ENCODE measurements at regions of chr17 and their contacts with region 1.

Region 1: GRCh38 chr17:82518826-82519810 is at the start of gene FOXK2:
- DNase-seq: peak; percentile 75
- ATAC-seq: peak; percentile 98
- H3K4me3 ChIP-seq: peak within 1 kb of the TSS; percentile 71
- H3K27ac ChIP-seq: peak within 1 kb of the TSS; percentile 90
- H3K4me1 ChIP-seq: peaks cover 5% of the 10 kb centered on the region
- H3K27me3 ChIP-seq: no peaks in the 10 kb centered on the region
- CTCF ChIP-seq: no peak
- EP300 ChIP-seq: no peak
- POLR2A ChIP-seq: peak; percentile 55
- RAD21 ChIP-seq: no peak
- polyA plus RNA-seq, gene FOXK2: 2.4 to 3.8 TPM

Region 2: DNA sequence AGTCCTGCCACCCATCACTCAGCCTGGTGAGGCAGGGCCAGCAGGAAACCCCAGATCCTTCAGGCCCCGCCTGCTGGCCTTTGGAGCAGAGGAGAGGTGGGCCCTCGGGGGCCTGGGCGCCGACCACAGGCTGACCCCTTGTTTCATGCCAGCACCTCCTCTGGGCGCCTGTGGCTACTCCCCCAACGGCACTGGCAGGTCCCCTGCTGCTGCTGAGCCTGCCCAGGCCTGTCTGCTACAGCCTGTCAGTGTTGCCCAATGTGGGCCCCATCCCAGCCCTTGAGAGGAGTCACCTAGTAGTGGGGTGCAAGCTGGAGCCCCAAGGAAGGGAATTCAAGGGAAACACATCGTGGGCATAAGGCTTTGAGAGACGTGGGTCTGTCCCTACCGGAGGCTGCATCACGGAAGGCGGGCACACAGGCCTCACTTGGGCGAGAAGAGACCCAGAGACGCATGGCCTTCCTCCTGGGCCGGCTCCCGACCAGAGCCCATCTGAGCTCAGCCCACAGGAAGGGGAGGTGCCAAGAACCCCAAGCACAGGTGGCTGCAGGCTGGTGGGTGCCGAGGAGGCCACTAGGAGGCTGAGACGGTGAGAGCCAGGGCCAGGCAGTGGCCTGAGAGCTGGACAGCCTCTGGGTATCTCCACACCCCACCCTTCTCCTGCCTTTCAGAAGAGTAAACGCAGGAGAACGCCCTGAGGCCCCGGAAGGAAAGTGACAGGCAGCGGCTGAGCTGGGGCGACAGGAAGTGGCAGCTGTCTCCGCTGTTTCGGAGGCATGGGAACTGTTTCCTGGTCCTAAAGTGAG is 413.0 kb before region 1 on chr17:
- CTCF ChIA-PET with region 1: no interaction called
- POLR2A ChIA-PET with region 1: no interaction called
- RAD21 ChIA-PET with region 1: no interaction called
- SMC1A ChIA-PET with region 1: no interaction called
- in situ Hi-C with region 1: no loop called
- intact Hi-C with region 1: no loop called
- DNase-seq: peak; percentile 51
- ATAC-seq: peak; percentile 99
- H3K4me3 ChIP-seq: peak overlapping the region; percentile 77
- H3K27ac ChIP-seq: peak overlapping the region; percentile 87
- H3K4me1 ChIP-seq: peaks cover 21% of the 10 kb centered on the region
- H3K27me3 ChIP-seq: no peaks in the 10 kb centered on the region
- CTCF ChIP-seq: peak; percentile 46 to 63 (median 56)
- EP300 ChIP-seq: no peak
- POLR2A ChIP-seq: peak; percentile 95
- RAD21 ChIP-seq: no peak

Region 3: GRCh38 chr17:82351716-82352488 is 167.2 kb before region 1 on chr17:
- CTCF ChIA-PET with region 1: no interaction called
- POLR2A ChIA-PET with region 1: no interaction called
- RAD21 ChIA-PET with region 1: no interaction called
- SMC1A ChIA-PET with region 1: no interaction called
- in situ Hi-C with region 1: no loop called
- intact Hi-C with region 1: no loop called
- DNase-seq: no peak
- ATAC-seq: peak; percentile 93
- H3K4me3 ChIP-seq: no peak overlapping the region
- H3K27ac ChIP-seq: no peak overlapping the region
- H3K4me1 ChIP-seq: peaks cover 15% of the 10 kb centered on the region
- H3K27me3 ChIP-seq: no peaks in the 10 kb centered on the region
- CTCF ChIP-seq: peak; percentile 92 to 93 (median 92)
- EP300 ChIP-seq: no peak
- POLR2A ChIP-seq: no peak
- RAD21 ChIP-seq: peak; percentile 86

Region 4: DNA sequence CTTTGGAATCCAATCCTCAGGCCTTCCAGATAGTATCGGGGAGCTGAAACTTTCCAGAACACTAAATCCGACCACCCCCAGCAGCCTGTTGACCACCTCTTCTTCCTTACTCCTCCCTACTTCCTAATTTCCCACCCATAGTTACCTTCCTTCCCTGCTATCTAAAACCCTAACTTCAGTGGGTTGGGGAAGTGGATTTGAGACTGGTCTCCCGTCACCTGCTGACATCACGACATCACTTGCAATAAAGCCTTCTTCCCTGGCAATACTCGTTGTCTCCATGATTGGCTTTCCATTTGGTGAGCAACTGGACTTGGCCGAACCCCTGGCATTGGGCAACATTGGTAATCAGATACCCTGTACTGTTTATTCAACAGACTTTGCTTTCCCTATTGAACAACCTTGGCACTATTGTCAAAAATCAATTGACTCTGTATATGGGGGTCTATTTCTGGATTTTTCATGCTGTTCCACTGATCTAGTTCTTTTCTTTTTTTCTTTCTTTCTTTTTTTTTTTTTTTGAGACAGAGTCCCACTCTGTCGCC is 11.4 kb before region 1 on chr17:
- CTCF ChIA-PET with region 1: interaction called, 6 read pairs
- POLR2A ChIA-PET with region 1: interaction called, 19 read pairs
- RAD21 ChIA-PET with region 1: interaction called, 4 read pairs
- SMC1A ChIA-PET with region 1: interaction called, 11 read pairs
- in situ Hi-C with region 1: no loop called
- intact Hi-C with region 1: no loop called
- DNase-seq: no peak
- ATAC-seq: no peak
- H3K4me3 ChIP-seq: no peak overlapping the region
- H3K27ac ChIP-seq: no peak overlapping the region; the same call in 1 of the 2 replicates
- H3K4me1 ChIP-seq: peaks cover 11% of the 10 kb centered on the region
- H3K27me3 ChIP-seq: no peaks in the 10 kb centered on the region
- CTCF ChIP-seq: no peak
- EP300 ChIP-seq: no peak
- POLR2A ChIP-seq: no peak
- RAD21 ChIP-seq: no peak

Region 5: DNA sequence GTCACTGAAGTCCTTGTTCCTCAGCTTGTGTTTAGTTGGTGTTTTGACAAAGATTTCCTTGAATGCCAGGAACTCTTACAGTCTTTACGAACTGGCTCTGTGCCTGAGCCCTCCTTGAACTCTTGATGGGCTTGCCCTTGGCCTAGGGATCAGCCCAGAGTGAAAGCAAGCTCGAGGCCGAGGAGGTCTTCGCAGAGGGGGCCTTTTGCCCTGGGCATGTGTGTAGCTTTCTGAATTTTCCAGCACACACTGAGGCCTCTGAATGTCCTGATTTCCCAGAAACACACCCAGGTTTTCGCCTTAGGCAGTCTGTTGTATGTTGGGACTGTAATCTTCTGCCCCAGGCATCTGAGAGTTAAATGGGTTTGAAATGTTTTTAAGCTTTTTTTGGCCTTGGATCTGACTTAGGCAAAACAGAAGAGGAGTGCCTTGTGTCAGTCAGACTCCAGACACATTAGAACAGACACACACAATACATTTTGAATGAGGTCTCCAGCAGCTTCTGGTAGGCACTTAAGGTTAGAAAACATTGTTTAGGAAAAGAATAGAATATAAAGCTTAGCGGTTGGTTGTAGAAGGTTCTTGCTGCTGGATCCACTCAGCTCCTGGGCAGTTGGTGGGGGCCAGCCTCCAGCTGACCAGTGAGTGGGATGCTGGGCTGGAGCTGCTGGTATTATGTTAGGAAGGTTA is 17.5 kb after region 1 on chr17:
- CTCF ChIA-PET with region 1: interaction called, 3 read pairs
- POLR2A ChIA-PET with region 1: interaction called, 11 read pairs
- RAD21 ChIA-PET with region 1: interaction called, 5 read pairs
- SMC1A ChIA-PET with region 1: interaction called, 9 read pairs
- in situ Hi-C with region 1: no loop called
- intact Hi-C with region 1: no loop called
- DNase-seq: no peak
- ATAC-seq: no peak
- H3K4me3 ChIP-seq: no peak overlapping the region
- H3K27ac ChIP-seq: peak overlapping the region; percentile 28
- H3K4me1 ChIP-seq: peaks cover 46% of the 10 kb centered on the region
- H3K27me3 ChIP-seq: no peaks in the 10 kb centered on the region
- CTCF ChIP-seq: no peak
- EP300 ChIP-seq: no peak
- POLR2A ChIP-seq: no peak
- RAD21 ChIP-seq: no peak

Region 6: GRCh38 chr17:82636626-82637598 is 117.8 kb after region 1 on chr17:
- CTCF ChIA-PET with region 1: no interaction called
- POLR2A ChIA-PET with region 1: no interaction called
- RAD21 ChIA-PET with region 1: no interaction called
- SMC1A ChIA-PET with region 1: no interaction called
- in situ Hi-C with region 1: no loop called
- intact Hi-C with region 1: no loop called
- DNase-seq: no peak
- ATAC-seq: no peak
- H3K4me3 ChIP-seq: no peak overlapping the region
- H3K27ac ChIP-seq: no peak overlapping the region
- H3K4me1 ChIP-seq: no peaks in the 10 kb centered on the region; the same call in 1 of the 2 replicates
- H3K27me3 ChIP-seq: no peaks in the 10 kb centered on the region
- CTCF ChIP-seq: no peak
- EP300 ChIP-seq: no peak
- POLR2A ChIP-seq: no peak
- RAD21 ChIP-seq: no peak